ENCODE measurements at regions of chr1 and their contacts with region 1.

Region 1: DNA sequence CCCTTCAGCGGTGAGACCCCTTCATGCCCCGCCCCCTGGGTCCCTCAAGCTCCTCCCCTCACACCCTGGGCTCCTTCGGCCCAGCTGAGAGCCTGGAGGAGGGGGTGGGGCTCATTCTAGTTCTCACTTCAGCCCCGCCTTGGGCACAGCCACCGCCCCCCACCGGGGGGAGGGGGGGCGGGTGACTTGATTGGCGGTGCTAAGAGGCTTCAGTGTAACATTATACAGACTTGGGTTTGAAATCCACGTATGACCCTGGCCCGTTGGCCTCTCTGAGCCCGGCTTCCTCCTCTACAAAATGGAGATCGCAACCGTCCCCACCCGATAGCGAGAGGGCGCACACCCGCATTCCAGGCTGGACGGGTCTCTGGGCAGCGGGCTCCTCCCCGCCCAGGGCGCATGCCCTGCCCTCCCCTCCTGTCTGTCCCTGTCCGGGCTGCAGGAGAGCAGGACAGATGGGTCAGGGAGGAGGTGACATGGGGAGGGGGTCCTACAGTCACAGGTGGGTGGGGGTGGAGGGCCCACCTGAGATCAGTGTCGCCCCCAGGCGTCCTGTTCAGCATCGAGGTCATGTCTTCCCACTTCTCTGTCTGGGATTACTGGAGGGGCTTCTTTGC is 5.1 kb downstream of the CLCNKB start:
- DNase-seq: peak; percentile 41
- H3K4me3 ChIP-seq: peak overlapping the region; percentile 21 to 32
- H3K27ac ChIP-seq: no peak overlapping the region
- H3K4me1 ChIP-seq: no peaks in the 10 kb centered on the region
- H3K27me3 ChIP-seq: no peaks in the 10 kb centered on the region
- CTCF ChIP-seq: no peak
- POLR2A ChIP-seq: no peak

Region 2: GRCh38 chr1:15810073-15810472 is 238.6 kb before region 1 on chr1:
- intact Hi-C with region 1: loop called (anchors 5 kb)
- DNase-seq: no peak
- H3K4me3 ChIP-seq: no peak overlapping the region
- H3K27ac ChIP-seq: no peak overlapping the region
- H3K4me1 ChIP-seq: no peaks in the 10 kb centered on the region
- H3K27me3 ChIP-seq: no peaks in the 10 kb centered on the region
- CTCF ChIP-seq: no peak
- POLR2A ChIP-seq: no peak

Region 3: GRCh38 chr1:16175610-16176553 is 127.2 kb after region 1 on chr1:
- intact Hi-C with region 1: no loop called
- DNase-seq: peak; percentile 82
- H3K4me3 ChIP-seq: no peak overlapping the region
- H3K27ac ChIP-seq: peak overlapping the region; percentile 72 to 79
- H3K4me1 ChIP-seq: peaks cover 21% of the 10 kb centered on the region
- H3K27me3 ChIP-seq: no peaks in the 10 kb centered on the region
- CTCF ChIP-seq: no peak
- POLR2A ChIP-seq: no peak

Measured in prostate gland (tissue), 2 donors.